ENCODE measurements at regions of chr3 and their contacts with region 1.

Region 1: GRCh38 chr3:45938864-45939263 is 4.4 kb upstream of the CXCR6 start:
- DNase-seq: peak; percentile 92
- ATAC-seq: peak; percentile 66
- H3K4me3 Mint-ChIP-seq: no peak overlapping the region
- H3K27ac Mint-ChIP-seq: no peak overlapping the region
- H3K4me1 Mint-ChIP-seq: peaks cover 27% of the 10 kb centered on the region
- H3K27me3 Mint-ChIP-seq: peaks cover 15% of the 10 kb centered on the region

Region 2: GRCh38 chr3:45915518-45916231 is 23.2 kb before region 1 on chr3:
- CTCF ChIA-PET with region 1: interaction called, 12 read pairs
- POLR2A ChIA-PET with region 1: no interaction called
- intact Hi-C with region 1: loop called in 1 of 2 experiments (anchors 1 kb)
- DNase-seq: peak; percentile 88
- ATAC-seq: peak; percentile 94
- H3K4me3 Mint-ChIP-seq: peak overlapping the region; percentile 22
- H3K27ac Mint-ChIP-seq: peak overlapping the region; percentile 37
- H3K4me1 Mint-ChIP-seq: peaks cover 33% of the 10 kb centered on the region
- H3K27me3 Mint-ChIP-seq: peaks cover 33% of the 10 kb centered on the region

Region 3: GRCh38 chr3:45962033-45962432 is 23.2 kb after region 1 on chr3:
- CTCF ChIA-PET with region 1: interaction called, 8 read pairs
- POLR2A ChIA-PET with region 1: interaction called, 4 read pairs
- intact Hi-C with region 1: loop called in 1 of 2 experiments (anchors 2 kb)
- DNase-seq: peak; percentile 61
- ATAC-seq: peak; percentile 60
- H3K4me3 Mint-ChIP-seq: no peak overlapping the region
- H3K27ac Mint-ChIP-seq: no peak overlapping the region
- H3K4me1 Mint-ChIP-seq: peaks cover 43% of the 10 kb centered on the region
- H3K27me3 Mint-ChIP-seq: peaks cover 3% of the 10 kb centered on the region

Region 4: GRCh38 chr3:45978006-45978761 is 39.3 kb after region 1 on chr3:
- CTCF ChIA-PET with region 1: interaction called, 6 read pairs
- POLR2A ChIA-PET with region 1: no interaction called
- intact Hi-C with region 1: loop called (anchors 1 to 5 kb)
- DNase-seq: peak; percentile 82
- ATAC-seq: peak; percentile 20
- H3K4me3 Mint-ChIP-seq: peak overlapping the region; percentile 22
- H3K27ac Mint-ChIP-seq: peak overlapping the region; percentile 91
- H3K4me1 Mint-ChIP-seq: peaks cover 71% of the 10 kb centered on the region
- H3K27me3 Mint-ChIP-seq: peaks cover 2% of the 10 kb centered on the region

Region 5: DNA sequence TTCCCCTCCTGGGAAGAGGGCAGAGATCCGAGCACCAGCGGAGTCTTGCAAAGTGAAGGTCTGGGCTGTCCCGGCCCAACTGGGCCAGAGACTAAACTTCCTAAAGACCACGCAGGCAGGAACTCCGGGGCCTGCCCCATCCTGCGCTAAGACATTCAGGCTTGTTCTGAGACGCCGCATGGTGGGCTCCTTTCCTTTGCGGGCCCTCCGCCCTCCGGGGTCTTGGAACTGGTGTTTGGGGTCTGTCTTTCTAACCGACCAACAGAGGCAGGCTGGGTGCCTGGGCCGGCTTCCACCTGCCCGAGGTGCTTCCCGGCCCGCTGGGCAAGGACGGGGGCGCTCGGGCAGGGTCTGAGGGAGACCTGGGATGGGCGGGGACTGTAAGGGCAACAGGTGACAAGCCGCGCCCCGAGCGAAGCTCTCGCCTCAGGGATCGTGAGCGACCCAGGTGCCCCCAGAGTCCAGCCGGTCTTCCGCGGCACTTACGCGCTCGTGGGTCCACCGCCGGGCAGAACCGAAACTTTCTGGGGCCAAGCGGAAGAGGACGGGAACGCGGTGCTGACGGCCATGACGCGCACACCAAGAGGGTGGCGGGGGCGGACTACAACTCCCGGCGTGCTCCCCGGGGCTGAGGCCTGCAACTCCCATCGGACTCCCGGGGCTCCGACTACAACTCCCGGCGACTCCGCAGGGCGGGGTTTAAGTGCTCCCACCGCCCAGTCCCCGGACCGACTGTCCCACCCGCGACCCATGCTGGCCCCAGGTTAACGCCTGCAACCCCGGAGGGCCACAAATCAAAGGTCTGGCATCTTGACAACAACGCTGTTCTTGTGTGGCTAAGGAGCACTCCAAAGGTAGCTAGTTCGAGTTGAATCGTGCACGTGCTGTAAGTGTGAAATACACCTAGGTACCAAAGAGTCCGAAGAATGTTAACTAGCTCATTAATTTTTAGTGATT is 56.6 kb after region 1 on chr3 and contains the start of gene FYCO1:
- CTCF ChIA-PET with region 1: interaction called, 9 read pairs
- POLR2A ChIA-PET with region 1: interaction called, 3 read pairs
- intact Hi-C with region 1: loop called (anchors 1 to 2 kb)
- DNase-seq: peak; percentile 94
- ATAC-seq: peak; percentile 89
- H3K4me3 Mint-ChIP-seq: peak within 1 kb of the TSS; percentile 80
- H3K27ac Mint-ChIP-seq: peak within 1 kb of the TSS; percentile 93
- H3K4me1 Mint-ChIP-seq: peaks cover 43% of the 10 kb centered on the region
- H3K27me3 Mint-ChIP-seq: no peaks in the 10 kb centered on the region
- total RNA-seq, gene FYCO1: 8.2 to 10.6 TPM

Region 6: DNA sequence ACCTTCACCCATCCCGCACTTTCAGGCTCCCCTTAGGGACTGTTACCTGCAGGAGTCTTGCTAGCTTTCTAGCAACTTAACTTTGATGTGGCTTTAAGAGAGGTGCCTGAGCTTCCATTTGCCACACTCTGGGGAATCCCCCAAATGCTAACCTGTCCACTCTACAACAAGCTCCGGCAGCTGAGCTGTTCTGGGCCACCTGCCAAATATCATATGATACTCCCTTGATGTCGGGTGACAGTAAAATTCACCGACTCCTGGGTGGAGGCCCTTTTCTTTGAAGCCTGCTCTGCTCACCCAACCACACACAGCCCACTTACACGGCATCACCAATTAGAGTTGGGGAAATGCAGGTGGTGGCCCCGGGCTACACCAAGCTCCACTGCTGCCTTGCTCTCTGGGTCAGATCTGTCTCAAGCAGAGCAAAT is 126.4 kb after region 1 on chr3:
- CTCF ChIA-PET with region 1: interaction called, 12 read pairs
- POLR2A ChIA-PET with region 1: no interaction called
- intact Hi-C with region 1: no loop called
- DNase-seq: peak; percentile 83
- ATAC-seq: peak; percentile 92
- H3K4me3 Mint-ChIP-seq: no peak overlapping the region
- H3K27ac Mint-ChIP-seq: no peak overlapping the region
- H3K4me1 Mint-ChIP-seq: peaks cover 68% of the 10 kb centered on the region
- H3K27me3 Mint-ChIP-seq: peaks cover 57% of the 10 kb centered on the region

Region 7: DNA sequence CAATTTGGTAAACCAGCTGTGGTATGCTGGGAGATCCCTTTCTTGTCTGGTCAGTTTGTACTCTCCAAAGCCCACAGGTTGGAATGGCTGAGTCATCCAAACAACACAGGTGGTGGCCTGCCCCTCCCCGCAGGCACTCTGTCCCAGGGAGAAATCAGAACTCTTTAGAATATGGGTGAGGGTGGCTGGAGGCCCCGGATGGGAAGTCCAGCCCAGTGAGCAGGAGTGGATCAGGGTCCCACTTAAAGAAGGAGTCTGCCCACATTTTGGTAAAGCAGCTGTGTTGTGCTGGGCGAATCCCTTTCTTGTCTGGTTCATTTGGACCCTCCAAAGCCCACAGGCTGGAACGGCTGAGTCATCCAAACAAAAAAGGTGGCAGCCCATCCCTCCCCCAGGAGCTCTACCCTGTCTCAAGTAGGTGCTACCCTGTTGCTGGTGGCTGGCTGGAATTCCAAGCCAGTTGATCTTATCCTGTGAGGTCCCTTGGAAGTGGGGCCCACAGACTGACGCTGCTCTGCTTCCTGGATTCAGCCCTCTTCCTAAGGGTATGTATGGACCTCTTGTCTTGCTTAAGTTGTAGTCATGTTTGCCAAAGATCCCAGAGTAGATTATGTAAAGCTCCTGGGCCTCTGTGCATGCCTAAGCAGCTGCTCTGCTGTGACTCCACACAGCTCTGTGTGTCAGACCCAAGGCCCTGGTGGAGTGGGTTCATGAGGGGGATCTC is 224.6 kb after region 1 on chr3:
- CTCF ChIA-PET with region 1: no interaction called
- POLR2A ChIA-PET with region 1: no interaction called
- intact Hi-C with region 1: no loop called
- DNase-seq: no peak
- ATAC-seq: no peak
- H3K4me3 Mint-ChIP-seq: no peak overlapping the region
- H3K27ac Mint-ChIP-seq: no peak overlapping the region
- H3K4me1 Mint-ChIP-seq: no peaks in the 10 kb centered on the region
- H3K27me3 Mint-ChIP-seq: peaks cover 3% of the 10 kb centered on the region

Region 8: GRCh38 chr3:46378426-46378942 is 439.6 kb after region 1 on chr3:
- CTCF ChIA-PET with region 1: interaction called, 12 read pairs
- POLR2A ChIA-PET with region 1: no interaction called
- intact Hi-C with region 1: loop called (anchors 2 kb)
- DNase-seq: peak; percentile 84
- ATAC-seq: peak; percentile 53
- H3K4me3 Mint-ChIP-seq: no peak overlapping the region
- H3K27ac Mint-ChIP-seq: no peak overlapping the region
- H3K4me1 Mint-ChIP-seq: peaks cover 28% of the 10 kb centered on the region
- H3K27me3 Mint-ChIP-seq: peaks cover 22% of the 10 kb centered on the region

Measured in activated CD4-positive, alpha-beta T cell treated with anti-CD3 and anti-CD28 coated beads for 36 hours (primary cell).